Posterior vena cava (tissue), 2 donors: ENCODE measurements at regions of chr18 and their contacts with region 1.

Region 1: GRCh38 chr18:34834897-34835296 is 124.8 kb downstream of the DTNA start:
- DNase-seq: no peak

Region 2: GRCh38 chr18:34789768-34790344 is 45.0 kb before region 1 on chr18:
- intact Hi-C with region 1: loop called in 1 of 2 experiments (anchors 1 kb)
- DNase-seq: no peak

Region 3: GRCh38 chr18:35993013-35993412 is 1158.1 kb after region 1 on chr18:
- intact Hi-C with region 1: no loop called
- DNase-seq: no peak